Panc1 (cell line): ENCODE measurements at regions of chr1 and their contacts with region 1.

Region 1: GRCh38 chr1:6303397-6304012 is 42.6 kb upstream of the GPR153 start:
- DNase-seq: no peak
- ATAC-seq: no peak
- H3K4me3 ChIP-seq: no peak overlapping the region
- H3K27ac ChIP-seq: no peak overlapping the region
- H3K4me1 ChIP-seq: no peaks in the 10 kb centered on the region
- H3K27me3 ChIP-seq: no peaks in the 10 kb centered on the region
- CTCF ChIP-seq: no peak

Region 2: DNA sequence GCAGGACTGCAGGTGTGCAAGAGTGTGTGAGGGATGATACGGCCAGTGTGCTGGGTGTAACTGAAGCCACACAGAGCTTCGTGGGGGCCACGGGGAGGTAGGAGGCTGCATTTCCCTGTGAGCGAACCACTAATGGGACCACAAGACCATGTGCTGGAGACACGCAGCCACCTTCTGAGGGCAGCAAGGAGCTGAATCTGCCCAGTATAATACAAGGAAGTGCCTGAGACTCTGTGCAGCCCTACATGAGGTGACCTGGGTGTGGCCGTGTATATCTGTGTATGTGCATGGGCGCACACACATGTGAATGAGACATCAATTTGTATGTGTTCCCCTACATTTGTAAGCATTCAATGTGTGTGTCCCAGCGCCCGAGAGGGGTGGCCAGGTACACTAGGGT is 174.2 kb before region 1 on chr1:
- CTCF ChIA-PET with region 1: no interaction called
- POLR2A ChIA-PET with region 1: no interaction called
- in situ Hi-C with region 1: no loop called
- intact Hi-C with region 1: no loop called
- DNase-seq: no peak
- ATAC-seq: no peak
- H3K4me3 ChIP-seq: no peak overlapping the region
- H3K27ac ChIP-seq: no peak overlapping the region
- H3K4me1 ChIP-seq: no peaks in the 10 kb centered on the region
- H3K27me3 ChIP-seq: no peaks in the 10 kb centered on the region
- CTCF ChIP-seq: no peak

Region 3: DNA sequence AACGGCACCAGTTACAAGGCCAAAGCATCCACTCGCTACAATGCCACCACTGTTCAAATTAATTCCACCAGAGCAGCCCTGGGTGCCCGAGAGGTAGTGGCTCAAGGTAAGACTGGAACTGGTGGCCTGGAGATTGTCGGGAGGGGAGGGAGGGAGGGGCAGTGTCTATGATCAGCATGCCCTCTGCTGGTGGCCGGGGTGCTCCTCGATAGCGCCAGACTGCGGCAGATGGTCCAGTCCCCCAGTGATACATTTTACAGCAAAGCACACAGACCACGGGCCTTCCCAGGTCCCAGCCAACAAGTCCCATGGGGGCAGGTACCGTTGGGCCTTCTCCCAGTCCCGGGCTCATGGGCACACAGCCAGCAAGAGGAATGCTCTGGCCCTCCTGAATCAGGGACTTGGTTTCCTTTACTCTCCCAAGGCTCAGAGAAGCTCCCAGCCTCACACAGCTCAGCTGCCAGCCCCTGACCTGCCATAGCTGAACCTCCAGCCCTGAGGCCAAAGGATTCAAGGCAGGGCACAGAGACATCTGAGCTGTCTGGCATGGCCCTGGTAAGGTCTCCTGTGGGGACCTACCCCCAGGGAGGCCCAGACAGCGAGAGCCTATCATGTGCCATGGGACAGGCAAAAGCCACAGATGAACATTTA is 74.7 kb after region 1 on chr1:
- CTCF ChIA-PET with region 1: no interaction called
- POLR2A ChIA-PET with region 1: interaction called, 10 read pairs
- in situ Hi-C with region 1: no loop called
- intact Hi-C with region 1: no loop called
- DNase-seq: no peak
- ATAC-seq: peak; percentile 88
- H3K4me3 ChIP-seq: no peak overlapping the region
- H3K27ac ChIP-seq: peak overlapping the region; percentile 26; the same call in 1 of the 2 replicates
- H3K4me1 ChIP-seq: peaks cover 4% of the 10 kb centered on the region; the same call in 1 of the 2 replicates
- H3K27me3 ChIP-seq: no peaks in the 10 kb centered on the region
- CTCF ChIP-seq: no peak; the same call in 1 of the 2 replicates